ENCODE measurements at regions of chr3 and their contacts with region 1.

Region 1: GRCh38 chr3:100581650-100582049 is 27.8 kb upstream of the ADGRG7 start:
- DNase-seq: no peak
- H3K4me3 ChIP-seq: no peak overlapping the region
- H3K27ac ChIP-seq: no peak overlapping the region
- H3K4me1 ChIP-seq: no peaks in the 10 kb centered on the region
- H3K27me3 ChIP-seq: no peaks in the 10 kb centered on the region
- CTCF ChIP-seq: no peak
- EP300 ChIP-seq: no peak
- POLR2A ChIP-seq: no peak

Region 2: GRCh38 chr3:100463002-100463401 is 118.6 kb before region 1 on chr3:
- in situ Hi-C with region 1: loop called in 1 of 4 experiments (anchors 10 kb)
- intact Hi-C with region 1: no loop called
- DNase-seq: no peak
- H3K4me3 ChIP-seq: no peak overlapping the region
- H3K27ac ChIP-seq: no peak overlapping the region
- H3K4me1 ChIP-seq: no peaks in the 10 kb centered on the region
- H3K27me3 ChIP-seq: no peaks in the 10 kb centered on the region
- CTCF ChIP-seq: peak; percentile 61 to 79 (median 67)
- EP300 ChIP-seq: no peak
- POLR2A ChIP-seq: no peak

Region 3: DNA sequence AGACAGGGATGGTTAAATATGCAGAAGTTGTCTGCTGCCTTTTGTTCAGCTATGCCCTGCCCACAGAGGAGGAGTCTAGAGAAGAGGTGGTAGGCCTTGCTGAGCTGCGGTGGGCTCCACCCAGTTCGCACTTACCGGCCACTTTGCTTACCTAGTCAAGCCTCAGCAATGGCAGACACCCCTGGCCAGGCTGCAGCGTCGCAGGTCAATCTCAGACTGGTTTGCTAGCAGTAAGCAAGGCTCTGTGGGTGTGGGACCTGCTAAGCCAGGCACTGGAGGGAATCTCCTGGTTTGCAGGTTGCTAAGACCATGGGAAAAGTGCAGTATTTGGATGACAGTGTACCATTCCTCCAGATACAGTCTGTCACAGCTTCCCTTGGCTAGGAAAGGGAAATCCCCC is 101.5 kb before region 1 on chr3:
- in situ Hi-C with region 1: no loop called
- intact Hi-C with region 1: no loop called
- DNase-seq: no peak
- H3K4me3 ChIP-seq: no peak overlapping the region
- H3K27ac ChIP-seq: no peak overlapping the region
- H3K4me1 ChIP-seq: no peaks in the 10 kb centered on the region
- H3K27me3 ChIP-seq: peaks cover 7% of the 10 kb centered on the region
- CTCF ChIP-seq: no peak
- EP300 ChIP-seq: no peak
- POLR2A ChIP-seq: no peak

Measured in transverse colon (tissue), 4 donors.